ENCODE measurements at regions of chr6 and their contacts with region 1.

Region 1: DNA sequence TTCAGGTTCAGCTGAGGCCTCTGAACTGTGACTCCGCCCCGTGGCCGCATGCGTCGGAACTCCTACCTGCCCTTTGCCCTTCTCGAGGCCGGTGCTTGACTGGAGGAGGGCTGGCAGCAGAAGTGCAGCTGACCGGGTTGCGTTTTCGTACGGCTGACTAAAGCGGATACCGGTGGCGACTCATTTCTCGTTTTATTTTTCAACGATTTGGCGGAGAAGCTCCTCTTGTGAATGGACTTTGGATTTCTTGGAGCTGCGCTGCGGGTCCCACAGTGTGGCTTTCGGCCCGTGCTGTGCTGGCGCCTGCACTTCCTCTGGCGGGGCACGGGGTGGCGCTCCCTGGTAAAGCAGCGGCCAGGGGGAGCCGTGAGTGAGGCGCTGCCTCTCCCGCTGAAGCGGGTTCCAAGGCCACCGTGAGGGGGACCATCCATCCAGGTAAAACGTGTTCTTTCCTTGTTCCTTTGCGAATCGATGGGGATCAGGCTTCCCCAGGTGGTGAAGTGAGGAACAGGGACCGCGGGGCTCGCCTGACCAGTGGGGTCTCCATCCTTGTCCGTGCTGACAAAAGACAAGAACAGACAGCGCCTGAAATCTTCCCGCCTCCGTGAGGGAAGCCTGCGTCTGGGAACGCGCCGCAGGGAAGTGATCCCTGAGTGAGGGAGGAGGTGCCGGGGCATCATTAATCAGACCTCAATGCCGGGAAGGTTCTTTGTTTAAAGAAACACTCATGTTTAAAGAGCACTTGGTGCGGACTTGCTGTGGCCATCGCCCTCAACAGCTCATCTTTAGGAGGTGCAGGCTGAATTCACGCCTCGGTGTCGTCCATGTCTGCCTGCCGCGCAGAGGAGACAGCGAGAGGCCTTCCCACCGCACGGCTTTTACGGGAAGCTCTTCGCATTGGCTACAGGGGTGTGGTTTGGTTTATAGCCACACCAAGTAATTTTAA is 38.8 kb downstream of the ERMARD start:
- DNase-seq: peak; percentile 84
- H3K4me3 Mint-ChIP-seq: peak overlapping the region; percentile 78
- H3K27ac Mint-ChIP-seq: peak overlapping the region; percentile 38
- H3K4me1 Mint-ChIP-seq: peaks cover 19% of the 10 kb centered on the region
- H3K27me3 Mint-ChIP-seq: peaks cover 7% of the 10 kb centered on the region

Region 2: DNA sequence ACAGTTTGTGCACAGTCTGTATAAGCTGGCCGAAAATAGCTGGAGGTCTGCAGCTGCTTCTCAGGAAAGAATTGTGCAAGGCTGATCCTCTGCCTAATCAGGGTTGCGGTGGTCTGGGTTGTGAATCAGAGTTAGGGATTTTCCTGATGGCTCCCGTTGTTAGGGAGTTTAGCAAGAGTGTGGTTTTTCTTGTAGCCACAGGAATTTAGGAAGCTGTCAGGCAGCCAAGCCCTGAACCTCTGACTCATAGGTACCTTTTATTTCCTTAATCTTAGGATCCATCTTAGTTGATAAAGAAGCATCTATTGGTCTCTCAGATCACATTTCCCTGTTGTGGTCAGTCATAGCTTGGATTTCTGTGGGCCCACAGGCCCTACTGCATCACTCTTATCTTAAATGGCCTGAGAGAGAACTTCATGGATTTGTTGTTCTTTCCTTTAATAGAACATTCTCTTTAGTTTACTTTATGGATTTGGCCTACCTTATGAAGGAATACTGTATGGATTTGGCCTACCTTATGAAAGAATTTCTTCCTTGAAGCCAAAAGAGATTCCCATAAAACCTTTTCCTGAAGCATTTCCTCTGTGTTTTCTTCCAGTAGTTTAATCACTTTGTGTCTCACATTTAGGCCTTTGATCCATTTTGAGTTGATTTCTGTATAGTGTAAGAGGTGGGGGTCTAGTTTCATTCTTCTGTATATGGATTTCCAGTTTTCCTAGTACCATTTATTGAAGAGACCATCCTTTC is 1782.5 kb before region 1 on chr6:
- CTCF ChIA-PET with region 1: no interaction called
- POLR2A ChIA-PET with region 1: no interaction called
- intact Hi-C with region 1: no loop called
- DNase-seq: no peak
- H3K4me3 Mint-ChIP-seq: no peak overlapping the region
- H3K27ac Mint-ChIP-seq: no peak overlapping the region
- H3K4me1 Mint-ChIP-seq: no peaks in the 10 kb centered on the region
- H3K27me3 Mint-ChIP-seq: no peaks in the 10 kb centered on the region

Region 3: GRCh38 chr6:169751242-169752073 is 38.8 kb before region 1 on chr6 and contains the starts of genes DYNLT2 and ERMARD:
- CTCF ChIA-PET with region 1: interaction called, 7 read pairs
- POLR2A ChIA-PET with region 1: interaction called, 6 read pairs
- intact Hi-C with region 1: loop called (anchors 1 kb)
- DNase-seq: peak; percentile 96
- H3K4me3 Mint-ChIP-seq: peak within 1 kb of the TSS; percentile 95
- H3K27ac Mint-ChIP-seq: peak within 1 kb of the TSS; percentile 98
- H3K4me1 Mint-ChIP-seq: peaks cover 29% of the 10 kb centered on the region
- H3K27me3 Mint-ChIP-seq: no peaks in the 10 kb centered on the region
- total RNA-seq, gene DYNLT2: 2.0 to 2.1 TPM
- total RNA-seq, gene ERMARD: 23.9 to 24.6 TPM

Region 4: GRCh38 chr6:169800668-169801395 is 10.6 kb after region 1 on chr6:
- CTCF ChIA-PET with region 1: interaction called, 58 read pairs
- POLR2A ChIA-PET with region 1: interaction called, 7 read pairs
- intact Hi-C with region 1: no loop called
- DNase-seq: no peak
- H3K4me3 Mint-ChIP-seq: no peak overlapping the region
- H3K27ac Mint-ChIP-seq: no peak overlapping the region
- H3K4me1 Mint-ChIP-seq: peaks cover 30% of the 10 kb centered on the region
- H3K27me3 Mint-ChIP-seq: peaks cover 21% of the 10 kb centered on the region

Region 5: GRCh38 chr6:169868458-169868857 is 78.2 kb after region 1 on chr6:
- CTCF ChIA-PET with region 1: no interaction called
- POLR2A ChIA-PET with region 1: no interaction called
- intact Hi-C with region 1: loop called (anchors 10 kb)
- DNase-seq: peak; percentile 79
- H3K4me3 Mint-ChIP-seq: no peak overlapping the region
- H3K27ac Mint-ChIP-seq: no peak overlapping the region
- H3K4me1 Mint-ChIP-seq: peaks cover 10% of the 10 kb centered on the region
- H3K27me3 Mint-ChIP-seq: no peaks in the 10 kb centered on the region

Region 6: DNA sequence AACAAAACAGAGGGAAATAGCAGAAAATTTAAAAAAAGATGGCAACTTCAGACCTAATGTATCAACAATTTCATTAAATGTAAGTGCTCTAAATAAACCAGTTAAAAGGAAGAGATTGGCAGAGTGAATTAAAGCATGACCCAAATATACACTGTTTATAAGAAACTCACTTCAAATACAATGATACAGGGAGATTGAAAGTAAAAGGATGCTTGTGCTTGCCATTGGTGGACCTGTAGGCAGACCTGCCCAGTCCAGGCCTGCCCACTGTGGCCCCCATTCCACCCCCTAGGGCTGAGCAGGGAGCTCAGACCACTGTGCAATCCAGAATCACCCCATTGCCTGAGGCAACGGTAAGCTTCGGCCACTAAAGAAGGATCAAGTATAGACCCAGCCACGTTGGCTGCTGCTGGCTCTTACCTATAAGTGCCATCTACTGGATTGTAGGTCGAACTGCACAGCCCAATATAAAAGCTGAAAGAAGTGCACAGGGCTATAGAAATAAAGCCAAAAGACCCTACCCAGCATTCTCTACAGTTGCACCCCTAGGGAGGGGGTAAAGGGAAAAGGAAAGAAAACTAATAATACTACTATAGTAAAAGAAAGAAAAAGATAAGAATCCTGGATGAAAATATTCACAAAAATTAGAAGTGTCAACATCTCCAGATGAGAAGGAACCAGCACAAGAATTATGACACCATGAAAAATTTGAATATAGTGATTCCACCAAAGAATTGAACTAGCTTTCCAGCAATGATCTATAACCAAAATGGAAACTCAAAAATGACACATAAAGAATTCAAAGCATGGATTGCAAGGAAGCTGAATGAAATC is 726.7 kb after region 1 on chr6:
- CTCF ChIA-PET with region 1: interaction called, 29 read pairs
- POLR2A ChIA-PET with region 1: no interaction called
- intact Hi-C with region 1: loop called (anchors 5 kb)
- DNase-seq: peak; percentile 46
- H3K4me3 Mint-ChIP-seq: no peak overlapping the region
- H3K27ac Mint-ChIP-seq: no peak overlapping the region
- H3K4me1 Mint-ChIP-seq: no peaks in the 10 kb centered on the region
- H3K27me3 Mint-ChIP-seq: peaks cover 6% of the 10 kb centered on the region

Measured in activated CD4-positive, alpha-beta memory T cell treated with anti-CD3 and anti-CD28 coated beads for 36 hours (primary cell).